ENCODE measurements at regions of chr13 and their contacts with region 1.

Region 1: DNA sequence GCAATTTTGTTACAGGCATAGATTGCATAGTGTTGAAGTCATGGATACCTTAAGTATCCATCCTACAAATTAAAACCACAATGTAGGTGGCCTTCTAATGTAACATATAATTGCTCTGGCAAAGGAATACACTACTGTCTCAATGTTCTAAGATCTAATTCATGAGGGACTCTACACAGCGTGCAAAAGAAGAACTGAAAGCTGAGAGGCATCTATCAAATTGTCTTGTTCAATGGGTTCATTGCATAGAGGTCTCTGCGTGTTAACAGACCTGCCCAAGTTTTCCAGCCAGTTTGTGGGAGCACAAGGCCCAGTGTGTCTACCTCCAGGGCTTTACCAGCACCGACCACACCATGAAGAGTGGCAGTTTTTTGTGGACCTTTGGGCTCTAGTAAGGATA is 451.4 kb downstream of the ITGBL1 start:
- DNase-seq: no peak
- H3K4me3 ChIP-seq: no peak overlapping the region
- CTCF ChIP-seq: no peak

Region 2: DNA sequence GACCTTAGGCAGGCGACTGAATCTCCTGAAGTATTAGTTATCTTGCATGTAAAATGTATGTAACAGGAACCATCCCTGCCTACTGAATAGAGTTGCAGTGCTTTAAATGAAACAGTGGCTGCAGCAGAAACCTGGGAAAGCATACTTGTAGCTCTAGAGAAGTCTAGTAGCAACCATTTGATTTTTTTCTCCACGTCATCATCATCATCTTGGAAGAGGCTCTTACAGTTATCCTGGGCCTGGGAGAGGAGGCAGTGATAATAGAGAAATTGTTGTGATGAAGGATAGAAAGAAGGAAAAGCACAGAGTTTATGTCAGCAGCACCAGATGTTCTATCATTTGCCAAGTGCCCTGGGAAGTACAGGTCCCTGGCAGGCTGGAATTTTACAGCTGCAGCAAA is 73.9 kb before region 1 on chr13:
- in situ Hi-C with region 1: loop called (anchors 5 kb)
- DNase-seq: no peak
- H3K4me3 ChIP-seq: no peak overlapping the region
- CTCF ChIP-seq: no peak

Region 3: DNA sequence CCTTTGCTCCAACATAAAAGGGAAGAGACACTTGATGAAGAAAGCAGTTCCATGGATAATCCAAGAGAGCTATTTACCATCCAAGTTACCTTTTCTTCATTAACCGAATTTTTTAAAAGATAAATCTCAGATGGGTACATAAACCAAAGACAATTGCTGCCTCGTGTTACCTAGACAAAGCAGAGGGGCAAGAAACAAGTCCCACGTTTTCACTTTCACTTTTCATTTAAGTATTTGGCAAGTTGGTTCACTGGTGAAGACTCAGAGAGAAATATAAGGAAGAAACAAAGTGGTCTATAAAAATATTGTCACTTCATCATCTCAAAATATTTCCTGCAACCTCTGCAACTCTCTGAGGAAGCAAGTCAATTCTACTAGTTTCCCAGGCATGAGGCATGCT is 51.9 kb after region 1 on chr13:
- in situ Hi-C with region 1: no loop called
- DNase-seq: no peak
- H3K4me3 ChIP-seq: no peak overlapping the region
- CTCF ChIP-seq: no peak

Measured in astrocyte of the cerebellum (primary cell).